ENCODE measurements at regions of chr1 and their contacts with region 1.

Region 1: GRCh38 chr1:36369061-36369861 is 16.5 kb downstream of the STK40 start:
- DNase-seq: peak in 4 of 5 donors; percentile 69 to 81 (median 74)
- ATAC-seq: peak in 3 of 4 donors; percentile 9 to 27 (median 13)
- H3K4me3 ChIP-seq: no peak overlapping the region
- H3K27ac ChIP-seq: peak overlapping the region in 3 of 12 donors; percentile 13 to 33 (median 28)
- H3K4me1 ChIP-seq: peaks cover 7 to 97% (median 58%) of the 10 kb centered on the region in 12 donors
- H3K27me3 ChIP-seq: no peaks in the 10 kb centered on the region
- CTCF ChIP-seq: peak; percentile 90 to 97 (median 95)
- POLR2A ChIP-seq: peak in 1 of 2 donors; percentile 15

Region 2: DNA sequence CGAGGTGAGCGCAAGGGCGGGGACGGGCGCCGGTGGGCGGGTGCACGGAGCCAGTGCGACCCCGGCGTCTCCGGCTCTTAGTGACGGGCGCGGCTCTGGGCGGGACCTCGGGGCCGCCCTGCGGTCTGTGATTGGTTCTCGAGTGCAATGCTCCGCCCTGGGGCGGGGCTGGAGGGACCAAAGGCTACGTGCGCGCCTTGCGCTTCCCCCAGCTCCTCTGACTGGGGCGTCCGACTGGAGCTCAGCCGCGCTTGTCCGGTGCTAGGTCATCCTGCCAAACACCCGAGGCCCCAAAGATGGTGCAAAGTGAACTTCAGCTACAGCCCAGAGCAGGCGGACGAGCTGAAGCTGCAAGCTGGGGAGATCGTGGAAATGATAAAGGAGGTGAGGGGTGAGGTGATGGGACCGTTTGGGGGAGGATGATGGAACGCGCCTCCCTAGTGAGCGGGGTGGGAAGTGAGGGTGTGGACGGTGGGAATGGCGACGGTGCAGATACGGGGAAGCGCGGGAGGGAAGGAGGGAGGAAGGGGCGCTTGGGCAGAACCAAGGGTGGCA is 62.3 kb before region 1 on chr1:
- intact Hi-C with region 1: loop called in 1 of 10 experiments (anchors 5 kb)
- DNase-seq: peak; percentile 92 to 96 (median 94)
- ATAC-seq: peak; percentile 95 to 98 (median 98)
- H3K4me3 ChIP-seq: peak overlapping the region; percentile 63 to 95 (median 82)
- H3K27ac ChIP-seq: peak overlapping the region in 11 of 12 donors; percentile 65 to 87 (median 74)
- H3K4me1 ChIP-seq: peaks cover 0 to 24% (median 16%) of the 10 kb centered on the region in 12 donors
- H3K27me3 ChIP-seq: no peaks in the 10 kb centered on the region
- CTCF ChIP-seq: no peak
- POLR2A ChIP-seq: peak; percentile 61 to 90

Region 3: DNA sequence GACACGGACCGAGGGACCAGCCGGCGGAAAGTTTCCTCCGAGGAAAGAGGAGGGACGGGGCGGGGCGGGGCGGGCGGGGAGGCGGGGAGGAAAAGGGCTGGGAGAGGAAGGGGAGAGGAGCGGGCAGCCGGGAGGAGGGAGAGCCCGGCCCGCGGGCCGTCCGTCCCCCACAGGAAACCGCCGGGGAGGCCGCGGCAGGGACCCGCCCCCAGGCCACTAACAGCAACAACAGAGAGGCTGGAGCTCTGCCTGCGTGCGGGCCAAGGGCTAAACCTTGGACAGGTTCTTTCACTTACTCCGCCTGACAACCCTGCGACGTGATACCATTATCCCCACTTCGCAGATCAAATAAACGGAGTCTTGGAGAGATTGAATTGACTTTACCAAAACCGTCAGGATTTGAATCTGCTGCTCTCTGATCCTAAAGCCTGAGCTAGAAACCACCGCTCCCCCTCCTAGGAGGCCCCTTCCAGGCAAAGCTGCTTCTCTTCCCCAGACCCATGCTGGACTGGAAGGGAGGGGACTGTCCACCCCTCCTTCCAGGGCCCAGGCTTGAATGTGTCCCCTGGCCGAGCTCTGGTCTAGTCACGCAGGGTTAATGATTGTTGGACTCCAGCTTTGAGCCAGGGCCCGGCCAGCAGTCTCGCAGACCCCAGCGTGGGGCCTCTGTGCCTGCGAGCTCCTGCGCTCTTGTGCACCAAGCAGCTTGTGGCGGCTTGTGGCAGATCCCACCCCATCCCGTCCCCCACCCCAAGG is 45.5 kb before region 1 on chr1 and contains the start of gene EVA1B:
- intact Hi-C with region 1: loop called in 5 of 10 experiments (anchors 2 to 5 kb)
- DNase-seq: peak; percentile 87 to 94 (median 91)
- ATAC-seq: peak; percentile 54 to 81 (median 64)
- H3K4me3 ChIP-seq: peak within 1 kb of the TSS; percentile 59 to 98 (median 85)
- H3K27ac ChIP-seq: peak within 1 kb of the TSS; percentile 72 to 97 (median 92)
- H3K4me1 ChIP-seq: peaks cover 3 to 43% (median 31%) of the 10 kb centered on the region in 12 donors
- H3K27me3 ChIP-seq: no peaks in the 10 kb centered on the region
- CTCF ChIP-seq: no peak
- POLR2A ChIP-seq: peak in 1 of 2 donors; percentile 33
- total RNA-seq, gene EVA1B: 5.9 to 42.3 (median 10.8) TPM